WTC11 (cell line): ENCODE measurements at regions of chr2 and their contacts with region 1.

Region 1: GRCh38 chr2:119246884-119247843 is 23.5 kb downstream of the STEAP3 start:
- DNase-seq: no peak
- ATAC-seq: peak; percentile 71
- H3K4me3 Mint-ChIP-seq: no peak overlapping the region
- H3K27ac Mint-ChIP-seq: no peak overlapping the region
- H3K4me1 Mint-ChIP-seq: no peaks in the 10 kb centered on the region
- H3K27me3 Mint-ChIP-seq: no peaks in the 10 kb centered on the region; the same call in 1 of the 2 replicates
- CTCF ChIP-seq: no peak

Region 2: DNA sequence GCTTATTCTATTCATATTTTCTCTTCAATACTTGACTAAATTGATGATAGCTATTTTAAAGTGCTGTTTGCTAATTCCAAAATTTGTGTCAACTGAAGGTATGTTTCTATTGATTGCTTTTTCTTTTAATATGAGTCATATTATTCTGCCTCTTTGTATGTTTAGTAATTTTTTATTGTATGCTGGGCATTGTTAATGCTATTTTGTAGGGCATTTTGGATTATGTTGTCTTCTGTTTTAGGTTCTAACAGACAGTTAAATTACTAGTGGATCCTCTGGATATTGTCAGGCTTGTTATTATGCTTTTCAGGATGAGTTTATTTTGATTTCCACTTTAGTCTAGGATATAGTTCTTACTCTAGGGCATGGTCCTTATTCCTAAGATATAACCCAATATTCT is 144.2 kb before region 1 on chr2:
- CTCF ChIA-PET with region 1: no interaction called
- POLR2A ChIA-PET with region 1: no interaction called
- DNase-seq: no peak
- ATAC-seq: no peak
- H3K4me3 Mint-ChIP-seq: no peak overlapping the region
- H3K27ac Mint-ChIP-seq: no peak overlapping the region
- H3K4me1 Mint-ChIP-seq: peaks cover 2% of the 10 kb centered on the region
- H3K27me3 Mint-ChIP-seq: peaks cover 6% of the 10 kb centered on the region; the same call in 1 of the 2 replicates
- CTCF ChIP-seq: no peak

Region 3: GRCh38 chr2:119156105-119156890 is 90.9 kb before region 1 on chr2:
- CTCF ChIA-PET with region 1: no interaction called
- POLR2A ChIA-PET with region 1: interaction called, 12 read pairs
- DNase-seq: peak; percentile 62
- ATAC-seq: peak; percentile 37
- H3K4me3 Mint-ChIP-seq: peak overlapping the region; percentile 93
- H3K27ac Mint-ChIP-seq: peak overlapping the region; percentile 55; the same call in 1 of the 2 replicates
- H3K4me1 Mint-ChIP-seq: peaks cover 37% of the 10 kb centered on the region
- H3K27me3 Mint-ChIP-seq: peaks cover 49% of the 10 kb centered on the region
- CTCF ChIP-seq: no peak

Region 4: DNA sequence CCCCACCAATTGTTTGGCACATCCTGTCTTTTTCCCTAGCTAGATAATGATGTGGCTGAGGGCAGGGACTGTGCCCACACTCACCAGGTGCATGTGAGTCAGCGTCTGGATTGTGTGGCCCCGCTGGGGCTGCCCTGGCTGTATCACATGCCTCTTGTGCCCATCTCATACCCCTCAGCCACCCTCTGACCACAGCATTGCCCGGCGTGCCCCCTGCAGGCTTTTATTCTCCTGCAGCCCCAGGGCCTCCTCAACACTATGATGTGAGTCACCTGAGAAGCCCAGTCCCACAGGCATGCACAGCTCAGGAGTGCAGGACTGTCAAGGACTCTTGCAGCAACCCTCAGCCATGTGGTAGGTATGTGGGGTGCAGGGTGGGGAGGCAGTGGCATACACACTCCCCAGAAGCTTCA is 38.4 kb before region 1 on chr2:
- CTCF ChIA-PET with region 1: no interaction called
- POLR2A ChIA-PET with region 1: no interaction called
- DNase-seq: no peak
- ATAC-seq: peak; percentile 51
- H3K4me3 Mint-ChIP-seq: no peak overlapping the region
- H3K27ac Mint-ChIP-seq: no peak overlapping the region
- H3K4me1 Mint-ChIP-seq: peaks cover 4% of the 10 kb centered on the region; the same call in 1 of the 2 replicates
- H3K27me3 Mint-ChIP-seq: no peaks in the 10 kb centered on the region
- CTCF ChIP-seq: no peak

Region 5: DNA sequence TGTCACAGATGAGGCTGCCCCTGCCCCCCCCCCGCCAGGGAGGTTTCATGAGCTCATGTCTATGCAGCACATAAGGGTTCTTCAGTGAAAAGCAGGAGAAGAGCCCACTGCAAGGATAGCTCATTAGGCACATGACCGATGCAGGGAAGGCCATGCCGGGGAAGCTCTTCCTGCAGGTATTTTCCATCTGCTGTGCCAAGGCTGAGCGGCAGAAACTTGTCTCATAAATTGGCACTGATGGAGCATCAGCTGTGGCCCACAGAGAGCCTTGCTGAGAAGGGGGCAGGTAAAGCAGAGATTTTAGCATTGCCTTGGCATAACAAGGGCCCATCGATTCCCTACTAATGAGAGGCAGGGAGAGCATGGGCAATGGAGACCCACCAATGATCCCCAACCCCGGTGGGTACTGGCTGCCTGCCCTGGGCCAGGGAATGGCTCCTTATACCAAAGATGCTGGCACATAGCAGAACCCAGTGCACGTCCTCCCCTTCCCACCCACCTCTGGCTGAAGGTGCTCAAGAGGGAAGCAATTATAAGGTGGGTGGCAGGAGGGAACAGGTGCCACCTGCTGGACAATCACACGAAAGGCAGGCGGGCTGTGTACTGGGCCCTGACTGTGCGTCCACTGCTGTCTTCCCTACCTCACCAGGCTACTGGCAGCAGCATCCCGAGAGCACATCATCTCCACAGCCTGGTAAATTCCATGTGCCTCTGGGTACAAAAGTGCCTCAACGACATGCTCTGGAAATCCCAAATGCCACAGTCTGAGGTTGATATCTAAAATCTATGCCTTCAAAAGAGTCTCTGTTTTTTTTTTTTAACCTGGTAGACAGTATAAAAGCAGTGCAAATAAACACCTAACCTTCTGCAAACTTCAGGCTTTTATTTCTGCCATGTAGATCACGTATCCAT is 17.9 kb after region 1 on chr2:
- CTCF ChIA-PET with region 1: interaction called, 13 read pairs
- POLR2A ChIA-PET with region 1: no interaction called
- DNase-seq: peak; percentile 71
- ATAC-seq: peak; percentile 96
- H3K4me3 Mint-ChIP-seq: no peak overlapping the region
- H3K27ac Mint-ChIP-seq: no peak overlapping the region
- H3K4me1 Mint-ChIP-seq: peaks cover 20% of the 10 kb centered on the region
- H3K27me3 Mint-ChIP-seq: no peaks in the 10 kb centered on the region
- CTCF ChIP-seq: peak; percentile 80